HCT116 (cell line): ENCODE measurements at regions of chr10 and their contacts with region 1.

Region 1: GRCh38 chr10:124106241-124106879 is 13.0 kb upstream of the CHST15 start:
- DNase-seq: peak; percentile 48
- ATAC-seq: peak; percentile 71
- H3K4me3 ChIP-seq: peak overlapping the region in 1 of 2 experiments; percentile 36; a peak in 2 of 4 replicates
- H3K27ac ChIP-seq: peak overlapping the region; percentile 57
- H3K4me1 ChIP-seq: peaks cover 25 to 30% of the 10 kb centered on the region in 2 experiments
- H3K27me3 ChIP-seq: no peaks in the 10 kb centered on the region
- CTCF ChIP-seq: no peak
- POLR2A ChIP-seq: no peak
- RAD21 ChIP-seq: peak; percentile 6; the same call in 1 of the 2 replicates

Region 2: GRCh38 chr10:124049484-124049883 is 56.9 kb before region 1 on chr10:
- CTCF ChIA-PET with region 1: no interaction called
- POLR2A ChIA-PET with region 1: no interaction called
- RAD21 ChIA-PET with region 1: no interaction called
- intact Hi-C with region 1: no loop called
- DNase-seq: peak; percentile 54
- ATAC-seq: peak; percentile 87
- H3K4me3 ChIP-seq: peak overlapping the region in 1 of 2 experiments; percentile 1; a peak in 1 of 4 replicates
- H3K27ac ChIP-seq: no peak overlapping the region
- H3K4me1 ChIP-seq: peaks cover 17 to 37% of the 10 kb centered on the region in 2 experiments
- H3K27me3 ChIP-seq: no peaks in the 10 kb centered on the region
- CTCF ChIP-seq: no peak
- POLR2A ChIP-seq: no peak
- RAD21 ChIP-seq: no peak

Region 3: GRCh38 chr10:124142960-124143359 is 36.6 kb after region 1 on chr10:
- CTCF ChIA-PET with region 1: no interaction called
- POLR2A ChIA-PET with region 1: interaction called, 3 read pairs
- RAD21 ChIA-PET with region 1: no interaction called
- intact Hi-C with region 1: loop called (anchors 1 kb)
- DNase-seq: no peak
- ATAC-seq: no peak
- H3K4me3 ChIP-seq: no peak overlapping the region
- H3K27ac ChIP-seq: no peak overlapping the region
- H3K4me1 ChIP-seq: no peaks in the 10 kb centered on the region
- H3K27me3 ChIP-seq: no peaks in the 10 kb centered on the region
- CTCF ChIP-seq: no peak
- POLR2A ChIP-seq: no peak
- RAD21 ChIP-seq: no peak

Region 4: DNA sequence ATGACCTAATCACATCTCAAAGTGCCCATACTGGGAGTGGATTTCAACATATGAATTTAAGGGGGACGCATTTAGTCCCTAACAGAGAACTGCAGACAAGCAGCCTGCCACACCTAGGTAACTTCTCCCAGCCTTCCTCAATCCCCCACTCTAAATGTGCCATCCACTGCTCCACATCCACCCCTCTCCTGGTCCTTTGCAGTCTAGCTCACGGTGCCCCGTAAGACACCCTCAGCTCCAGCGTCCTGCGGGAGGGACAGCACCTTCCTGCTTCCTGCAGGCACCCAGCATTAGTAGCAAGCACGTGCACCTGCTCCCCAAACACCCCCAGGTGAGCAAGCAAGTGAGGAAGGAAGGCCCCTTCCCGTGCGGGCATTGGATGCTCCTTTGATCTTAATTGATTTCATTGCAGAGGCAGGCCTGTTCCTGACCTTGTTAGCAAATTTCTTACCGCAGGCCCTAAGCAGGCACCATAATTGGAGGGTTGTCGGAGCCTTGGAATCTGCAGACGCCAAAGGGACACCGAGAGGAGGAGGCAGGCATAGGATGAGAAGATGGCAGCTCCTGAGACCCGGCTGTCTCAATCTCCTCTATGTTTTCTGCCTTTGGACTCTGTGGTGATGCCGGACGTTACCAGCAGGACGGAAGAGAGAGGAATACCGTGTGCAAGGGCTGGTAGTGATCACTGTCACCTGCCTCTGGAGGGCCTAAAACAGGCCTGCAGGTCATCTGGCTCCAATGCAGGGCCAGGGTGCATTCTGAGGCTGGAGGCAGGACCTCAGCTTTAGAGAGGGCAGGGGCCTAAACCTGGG is 62.8 kb after region 1 on chr10:
- CTCF ChIA-PET with region 1: no interaction called
- POLR2A ChIA-PET with region 1: no interaction called
- RAD21 ChIA-PET with region 1: no interaction called
- intact Hi-C with region 1: no loop called
- DNase-seq: no peak
- ATAC-seq: peak; percentile 49
- H3K4me3 ChIP-seq: no peak overlapping the region
- H3K27ac ChIP-seq: no peak overlapping the region
- H3K4me1 ChIP-seq: no peaks in the 10 kb centered on the region
- H3K27me3 ChIP-seq: no peaks in the 10 kb centered on the region
- CTCF ChIP-seq: no peak
- POLR2A ChIP-seq: no peak
- RAD21 ChIP-seq: no peak